ENCODE measurements at regions of chr6 and their contacts with region 1.

Region 1: GRCh38 chr6:57316581-57317059 is 810 bp upstream of the PRIM2 start:
- DNase-seq: peak; percentile 90
- H3K4me3 ChIP-seq: peak overlapping the region; percentile 58
- CTCF ChIP-seq: peak; percentile 72

Region 2: GRCh38 chr6:56902641-56903464 is 413.8 kb before region 1 on chr6:
- in situ Hi-C with region 1: loop called (anchors 10 kb)
- DNase-seq: peak; percentile 48
- H3K4me3 ChIP-seq: no peak overlapping the region
- CTCF ChIP-seq: peak; percentile 53

Region 3: DNA sequence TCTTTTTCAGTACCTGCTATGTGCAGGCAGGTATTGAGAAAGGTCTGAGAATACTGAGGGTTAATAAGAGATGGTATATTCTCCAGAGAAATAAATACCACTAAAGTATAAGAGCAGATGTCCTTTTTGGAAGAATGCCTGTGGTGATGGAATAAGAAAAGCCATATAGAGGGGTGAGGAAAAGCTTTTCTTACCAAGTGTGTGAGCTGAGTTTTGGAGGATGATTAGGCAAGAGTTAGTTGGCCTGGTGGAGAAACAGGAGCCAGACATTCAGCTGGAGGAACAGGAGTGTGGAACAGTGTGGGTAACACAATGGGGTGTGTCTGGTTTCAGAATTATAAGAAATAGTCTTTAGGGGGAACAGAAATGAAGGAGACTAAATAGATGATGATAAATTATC is 206.7 kb before region 1 on chr6:
- in situ Hi-C with region 1: loop called (anchors 10 kb)
- DNase-seq: no peak
- H3K4me3 ChIP-seq: no peak overlapping the region
- CTCF ChIP-seq: no peak

Region 4: GRCh38 chr6:57158658-57159057 is 158.0 kb before region 1 on chr6:
- in situ Hi-C with region 1: no loop called
- DNase-seq: no peak
- H3K4me3 ChIP-seq: no peak overlapping the region
- CTCF ChIP-seq: no peak

Region 5: DNA sequence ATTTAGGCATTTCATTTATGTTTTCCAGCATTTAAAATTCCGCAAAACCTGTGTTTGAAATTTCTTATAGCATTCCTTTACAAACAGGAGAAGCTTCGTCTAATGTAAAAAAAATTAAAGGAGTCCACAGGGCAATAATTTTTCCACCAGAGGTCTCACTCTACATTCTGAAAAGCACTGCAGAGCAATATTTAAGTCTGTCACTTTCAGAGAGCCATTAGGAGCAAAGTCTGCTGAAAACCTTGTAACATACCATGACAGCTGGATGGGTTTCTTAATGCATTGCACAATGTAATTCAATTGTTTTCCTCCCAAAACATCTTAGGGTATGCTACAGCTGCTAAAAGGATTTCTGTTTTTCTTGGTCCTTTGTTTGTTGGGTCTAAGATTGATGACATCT is 126.5 kb before region 1 on chr6:
- in situ Hi-C with region 1: loop called (anchors 5 kb)
- DNase-seq: no peak
- H3K4me3 ChIP-seq: no peak overlapping the region
- CTCF ChIP-seq: peak; percentile 40

Region 6: GRCh38 chr6:57267586-57268293 is 48.9 kb before region 1 on chr6:
- in situ Hi-C with region 1: loop called (anchors 5 kb)
- DNase-seq: peak; percentile 99
- H3K4me3 ChIP-seq: no peak overlapping the region
- CTCF ChIP-seq: peak; percentile 57